Sigmoid colon (tissue), 7 donors: ENCODE measurements at regions of chr2 and their contacts with region 1.

Region 1: DNA sequence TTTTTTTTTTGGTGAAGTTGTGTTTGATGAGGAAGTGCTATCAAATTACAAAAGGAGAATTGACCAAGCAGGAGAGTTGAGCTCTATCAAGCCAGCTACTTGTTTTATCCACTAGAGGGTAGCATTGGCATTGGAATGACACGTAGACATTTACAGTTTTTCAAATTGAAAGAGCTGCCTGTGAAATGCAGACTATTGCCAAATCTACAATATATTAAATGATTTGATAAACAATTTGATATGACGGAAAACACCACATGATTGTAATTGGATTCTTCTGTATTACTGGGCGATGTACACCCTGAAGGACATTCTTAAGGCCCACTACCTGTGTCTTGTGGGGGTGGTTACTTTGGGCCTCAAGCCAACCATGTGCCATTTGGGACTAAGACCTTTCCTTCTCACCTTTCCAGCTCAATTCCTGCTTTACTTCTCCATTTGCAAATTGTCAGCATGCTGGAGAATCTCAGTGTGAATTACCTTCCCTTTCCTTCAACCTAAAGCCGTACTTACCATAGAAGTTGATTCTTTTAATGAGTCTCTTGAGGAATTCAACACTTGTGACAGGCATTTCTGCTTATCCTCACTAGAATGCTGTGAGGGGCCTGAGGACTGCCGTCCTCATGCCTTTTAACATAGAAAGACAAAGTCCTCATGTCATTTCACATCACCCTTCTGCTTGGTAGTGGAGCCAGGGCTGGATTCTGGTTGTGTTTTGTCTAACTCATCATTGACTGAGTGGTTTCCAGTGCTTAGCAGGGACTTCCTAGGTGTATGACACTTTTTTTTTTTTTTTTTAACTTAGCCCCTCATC is 134.8 kb upstream of the THUMPD2 start:
- DNase-seq: no peak
- H3K4me3 ChIP-seq: no peak overlapping the region
- H3K27ac ChIP-seq: peak overlapping the region in 2 of 4 donors; percentile 22 to 27
- H3K4me1 ChIP-seq: peaks cover 0 to 8% (median 5%) of the 10 kb centered on the region in 4 donors
- H3K27me3 ChIP-seq: no peaks in the 10 kb centered on the region
- CTCF ChIP-seq: peak; percentile 54 to 71 (median 67)
- EP300 ChIP-seq: no peak
- POLR2A ChIP-seq: no peak

Region 2: GRCh38 chr2:40554668-40555285 is 640.9 kb after region 1 on chr2:
- intact Hi-C with region 1: loop called (anchors 2 kb)
- DNase-seq: peak; percentile 70
- H3K4me3 ChIP-seq: no peak overlapping the region
- H3K27ac ChIP-seq: no peak overlapping the region
- H3K4me1 ChIP-seq: no peaks in the 10 kb centered on the region
- H3K27me3 ChIP-seq: no peaks in the 10 kb centered on the region
- CTCF ChIP-seq: peak; percentile 49 to 80 (median 60)
- EP300 ChIP-seq: no peak
- POLR2A ChIP-seq: no peak

Region 3: DNA sequence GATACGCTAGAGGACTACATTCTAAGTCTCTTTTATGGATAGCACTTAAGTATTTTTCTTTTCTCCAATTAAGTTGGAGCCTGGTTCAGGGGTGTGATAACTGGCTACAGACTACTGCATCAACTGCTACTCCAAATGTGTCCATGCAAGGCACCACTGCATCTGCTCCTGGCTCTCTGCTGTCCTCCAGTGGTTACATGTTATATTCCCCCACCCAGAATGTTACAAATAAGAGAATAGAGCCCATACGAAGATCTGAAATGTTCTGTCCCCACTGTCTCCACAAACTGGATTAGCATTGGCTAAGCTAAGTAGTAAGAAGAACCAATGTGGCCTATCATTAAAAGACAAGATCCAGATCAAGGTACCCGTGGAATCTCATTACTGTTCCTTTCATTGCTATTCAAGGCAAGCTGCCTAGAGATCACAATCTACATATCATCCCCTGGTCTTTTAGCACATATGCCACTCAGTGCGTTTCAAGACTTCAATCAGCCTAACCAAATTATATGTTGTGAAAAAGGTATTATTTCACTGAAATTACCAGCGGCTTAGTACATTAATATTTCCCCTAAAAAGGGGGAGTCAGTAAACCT is 846.3 kb after region 1 on chr2:
- intact Hi-C with region 1: loop called (anchors 5 kb)
- DNase-seq: peak; percentile 72
- H3K4me3 ChIP-seq: no peak overlapping the region
- H3K27ac ChIP-seq: peak overlapping the region in 2 of 4 donors; percentile 67 to 70
- H3K4me1 ChIP-seq: peaks cover 0 to 22% (median 18%) of the 10 kb centered on the region in 4 donors
- H3K27me3 ChIP-seq: no peaks in the 10 kb centered on the region
- CTCF ChIP-seq: peak; percentile 68 to 85 (median 76)
- EP300 ChIP-seq: no peak
- POLR2A ChIP-seq: no peak

Region 4: GRCh38 chr2:41698678-41699422 is 1785.0 kb after region 1 on chr2:
- intact Hi-C with region 1: loop called (anchors 2 kb)
- DNase-seq: peak; percentile 68
- H3K4me3 ChIP-seq: peak overlapping the region in 1 of 4 donors; percentile 8
- H3K27ac ChIP-seq: no peak overlapping the region
- H3K4me1 ChIP-seq: peaks cover 0 to 26% (median 10%) of the 10 kb centered on the region in 4 donors
- H3K27me3 ChIP-seq: no peaks in the 10 kb centered on the region
- CTCF ChIP-seq: peak; percentile 44 to 92 (median 63)
- EP300 ChIP-seq: no peak
- POLR2A ChIP-seq: no peak

Region 5: GRCh38 chr2:41782306-41783158 is 1868.7 kb after region 1 on chr2:
- intact Hi-C with region 1: loop called (anchors 5 kb)
- DNase-seq: no peak
- H3K4me3 ChIP-seq: no peak overlapping the region
- H3K27ac ChIP-seq: no peak overlapping the region
- H3K4me1 ChIP-seq: no peaks in the 10 kb centered on the region
- H3K27me3 ChIP-seq: no peaks in the 10 kb centered on the region
- CTCF ChIP-seq: peak; percentile 35 to 77 (median 70)
- EP300 ChIP-seq: no peak
- POLR2A ChIP-seq: no peak